Right cardiac atrium (tissue), 5 donors: ENCODE measurements at regions of chr11 and their contacts with region 1.

Region 1: GRCh38 chr11:19712281-19713220 is at the start of gene NAV2:
- DNase-seq: peak; percentile 94 to 97 (median 96)
- ATAC-seq: peak; percentile 98
- H3K4me3 ChIP-seq: peak within 1 kb of the TSS; percentile 66
- H3K27ac ChIP-seq: peak within 1 kb of the TSS; percentile 80
- H3K4me1 ChIP-seq: peaks cover 9% of the 10 kb centered on the region
- H3K27me3 ChIP-seq: no peaks in the 10 kb centered on the region
- total RNA-seq, gene NAV2: 7.9 to 12.9 (median 10.1) TPM

Region 2: DNA sequence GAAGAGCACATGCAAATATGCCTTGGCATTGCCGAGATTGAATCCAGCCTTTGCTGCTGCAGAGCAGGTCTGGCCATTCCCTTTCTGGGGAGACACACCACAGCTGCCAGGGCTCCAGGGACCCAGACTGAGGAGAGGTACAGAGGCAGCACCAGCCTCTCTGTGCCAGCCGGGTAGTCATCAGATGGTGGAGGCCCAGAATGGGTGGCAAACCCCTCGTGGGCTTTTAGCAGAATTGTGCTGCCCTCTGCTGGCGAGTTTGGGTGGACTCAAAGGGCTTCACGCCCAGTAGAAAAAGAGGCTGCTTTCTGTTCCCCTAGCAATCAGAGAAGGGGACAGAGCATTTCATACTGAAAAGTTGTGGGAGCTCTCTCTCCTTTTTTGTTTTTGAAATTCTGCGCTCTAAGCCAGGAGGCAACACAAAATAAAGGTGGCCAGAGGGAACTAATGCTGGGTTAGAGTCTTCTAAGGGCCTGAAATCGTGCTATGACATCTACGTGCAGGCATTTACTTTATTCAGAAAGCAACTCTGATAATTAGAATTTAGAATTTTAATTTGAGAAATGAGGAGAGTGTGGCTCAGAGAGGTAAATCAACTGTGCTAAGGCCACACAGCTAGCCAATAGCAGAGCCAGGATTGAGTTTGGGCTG is 158.7 kb before region 1 on chr11:
- intact Hi-C with region 1: no loop called
- DNase-seq: peak; percentile 83 to 93 (median 90)
- ATAC-seq: peak; percentile 73 to 79
- H3K4me3 ChIP-seq: no peak overlapping the region
- H3K27ac ChIP-seq: no peak overlapping the region
- H3K4me1 ChIP-seq: no peaks in the 10 kb centered on the region
- H3K27me3 ChIP-seq: no peaks in the 10 kb centered on the region

Region 3: GRCh38 chr11:19577976-19578619 is 134.5 kb before region 1 on chr11:
- intact Hi-C with region 1: loop called in 2 of 4 experiments (anchors 10 kb)
- DNase-seq: peak; percentile 43 to 77 (median 74)
- ATAC-seq: peak; percentile 74
- H3K4me3 ChIP-seq: no peak overlapping the region
- H3K27ac ChIP-seq: peak overlapping the region; percentile 83
- H3K4me1 ChIP-seq: peaks cover 19% of the 10 kb centered on the region
- H3K27me3 ChIP-seq: no peaks in the 10 kb centered on the region

Region 4: DNA sequence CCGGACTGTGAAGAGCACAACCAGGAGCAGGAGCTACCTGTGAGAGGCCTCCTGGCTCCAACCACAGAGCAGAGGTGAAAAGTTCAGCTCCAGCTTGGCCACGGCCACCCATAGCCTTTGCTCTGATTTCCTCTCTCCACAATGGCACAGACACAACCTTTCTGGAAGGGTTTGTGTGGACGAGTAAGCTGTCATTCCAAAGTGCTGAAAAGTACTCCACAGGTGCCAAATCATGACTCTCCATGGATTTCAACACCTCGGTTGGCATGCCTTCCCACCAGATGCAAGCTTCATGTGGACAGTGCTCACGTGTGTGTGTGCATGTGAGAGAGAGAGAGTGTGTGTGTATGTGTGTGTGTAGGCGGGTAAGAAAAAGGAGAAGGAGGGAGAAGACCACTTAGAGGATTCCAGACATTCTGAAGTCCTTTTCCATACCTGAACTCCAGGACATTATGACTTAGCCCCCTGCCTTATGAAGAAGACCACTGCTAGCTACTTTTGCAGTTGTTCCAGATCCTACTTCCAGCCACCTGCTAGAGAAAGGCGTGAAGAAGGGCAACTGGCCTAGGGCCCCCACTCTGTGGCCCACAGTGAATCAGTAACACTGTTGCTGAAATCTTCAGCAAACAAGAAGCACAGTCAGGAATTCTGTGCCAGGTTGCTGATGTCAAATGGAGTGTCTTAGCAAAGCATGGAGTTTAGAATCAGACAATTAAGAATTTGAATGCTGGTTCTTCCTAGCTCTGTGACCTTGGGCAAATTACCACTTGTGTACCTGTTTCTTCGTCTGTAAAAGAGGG is 13.9 kb before region 1 on chr11:
- intact Hi-C with region 1: loop called in 1 of 4 experiments (anchors 2 kb)
- DNase-seq: peak; percentile 67 to 78 (median 74)
- ATAC-seq: peak; percentile 82 to 85
- H3K4me3 ChIP-seq: no peak overlapping the region
- H3K27ac ChIP-seq: peak overlapping the region; percentile 77
- H3K4me1 ChIP-seq: peaks cover 9% of the 10 kb centered on the region
- H3K27me3 ChIP-seq: no peaks in the 10 kb centered on the region

Region 5: GRCh38 chr11:20881328-20882079 is 1169.0 kb after region 1 on chr11:
- intact Hi-C with region 1: no loop called
- DNase-seq: no peak
- ATAC-seq: no peak
- H3K4me3 ChIP-seq: no peak overlapping the region
- H3K27ac ChIP-seq: no peak overlapping the region
- H3K4me1 ChIP-seq: no peaks in the 10 kb centered on the region
- H3K27me3 ChIP-seq: no peaks in the 10 kb centered on the region